ENCODE measurements at regions of chr11 and their contacts with region 1.

Region 1: GRCh38 chr11:76152086-76152681 is 54.1 kb downstream of the WNT11 start:
- DNase-seq: peak; percentile 68 to 81
- ATAC-seq: peak; percentile 91 to 95
- H3K4me3 ChIP-seq: peak overlapping the region; percentile 45 to 64 (median 52)
- H3K27ac ChIP-seq: no peak overlapping the region
- H3K4me1 ChIP-seq: peaks cover 3 to 10% of the 10 kb centered on the region in 2 donors
- H3K27me3 ChIP-seq: no peaks in the 10 kb centered on the region
- CTCF ChIP-seq: peak; percentile 91 to 97 (median 96)
- POLR2A ChIP-seq: no peak

Region 2: GRCh38 chr11:75786101-75786736 is 366.0 kb before region 1 on chr11:
- in situ Hi-C with region 1: loop called in 1 of 4 experiments (anchors 25 kb)
- intact Hi-C with region 1: no loop called
- DNase-seq: no peak
- ATAC-seq: no peak
- H3K4me3 ChIP-seq: no peak overlapping the region
- H3K27ac ChIP-seq: no peak overlapping the region
- H3K4me1 ChIP-seq: no peaks in the 10 kb centered on the region
- H3K27me3 ChIP-seq: no peaks in the 10 kb centered on the region
- CTCF ChIP-seq: no peak
- POLR2A ChIP-seq: no peak

Region 3: GRCh38 chr11:75802913-75803820 is 349.0 kb before region 1 on chr11:
- in situ Hi-C with region 1: loop called in 2 of 4 experiments (anchors 10 to 25 kb)
- intact Hi-C with region 1: loop called (anchors 1 kb)
- DNase-seq: peak; percentile 52 to 66
- ATAC-seq: peak; percentile 91 to 95
- H3K4me3 ChIP-seq: no peak overlapping the region
- H3K27ac ChIP-seq: no peak overlapping the region
- H3K4me1 ChIP-seq: no peaks in the 10 kb centered on the region
- H3K27me3 ChIP-seq: no peaks in the 10 kb centered on the region
- CTCF ChIP-seq: peak; percentile 76 to 93 (median 89)
- POLR2A ChIP-seq: no peak

Region 4: GRCh38 chr11:75896843-75897419 is 255.3 kb before region 1 on chr11:
- in situ Hi-C with region 1: loop called (anchors 5 kb)
- intact Hi-C with region 1: loop called (anchors 1 kb)
- DNase-seq: no peak
- ATAC-seq: peak in 1 of 2 donors; percentile 46
- H3K4me3 ChIP-seq: no peak overlapping the region
- H3K27ac ChIP-seq: no peak overlapping the region
- H3K4me1 ChIP-seq: peaks cover 13 to 21% of the 10 kb centered on the region in 2 donors
- H3K27me3 ChIP-seq: no peaks in the 10 kb centered on the region
- CTCF ChIP-seq: peak; percentile 61 to 74 (median 63)
- POLR2A ChIP-seq: no peak

Region 5: GRCh38 chr11:75907906-75908527 is 244.2 kb before region 1 on chr11:
- in situ Hi-C with region 1: loop called in 1 of 4 experiments (anchors 5 kb)
- intact Hi-C with region 1: no loop called
- DNase-seq: no peak
- ATAC-seq: no peak
- H3K4me3 ChIP-seq: no peak overlapping the region
- H3K27ac ChIP-seq: no peak overlapping the region
- H3K4me1 ChIP-seq: peaks cover 15 to 19% of the 10 kb centered on the region in 2 donors
- H3K27me3 ChIP-seq: no peaks in the 10 kb centered on the region
- CTCF ChIP-seq: no peak
- POLR2A ChIP-seq: no peak

Region 6: DNA sequence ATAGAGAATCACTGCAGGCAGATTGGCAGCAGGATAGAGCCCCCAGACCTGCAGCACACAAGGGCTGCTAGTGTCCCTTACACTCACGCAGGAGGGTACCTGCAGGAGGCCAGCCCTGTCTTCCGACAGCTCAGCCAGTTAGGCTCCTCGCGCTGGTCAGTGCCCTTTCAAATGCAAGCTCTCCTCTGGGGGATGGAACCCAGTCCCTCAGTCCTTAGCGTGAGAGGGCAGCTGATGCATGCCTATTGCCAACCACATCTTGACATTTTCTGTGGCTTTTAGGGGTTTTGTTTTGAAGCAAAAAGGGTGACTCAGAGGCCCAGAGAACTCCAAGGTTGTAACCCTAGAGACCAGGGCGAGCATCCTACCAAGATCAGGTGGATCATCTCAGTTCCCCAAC is 14.1 kb after region 1 on chr11:
- in situ Hi-C with region 1: no loop called
- intact Hi-C with region 1: no loop called
- DNase-seq: no peak
- ATAC-seq: no peak
- H3K4me3 ChIP-seq: no peak overlapping the region
- H3K27ac ChIP-seq: no peak overlapping the region
- H3K4me1 ChIP-seq: peaks cover 7 to 11% of the 10 kb centered on the region in 2 donors
- H3K27me3 ChIP-seq: no peaks in the 10 kb centered on the region
- CTCF ChIP-seq: no peak
- POLR2A ChIP-seq: no peak

Region 7: DNA sequence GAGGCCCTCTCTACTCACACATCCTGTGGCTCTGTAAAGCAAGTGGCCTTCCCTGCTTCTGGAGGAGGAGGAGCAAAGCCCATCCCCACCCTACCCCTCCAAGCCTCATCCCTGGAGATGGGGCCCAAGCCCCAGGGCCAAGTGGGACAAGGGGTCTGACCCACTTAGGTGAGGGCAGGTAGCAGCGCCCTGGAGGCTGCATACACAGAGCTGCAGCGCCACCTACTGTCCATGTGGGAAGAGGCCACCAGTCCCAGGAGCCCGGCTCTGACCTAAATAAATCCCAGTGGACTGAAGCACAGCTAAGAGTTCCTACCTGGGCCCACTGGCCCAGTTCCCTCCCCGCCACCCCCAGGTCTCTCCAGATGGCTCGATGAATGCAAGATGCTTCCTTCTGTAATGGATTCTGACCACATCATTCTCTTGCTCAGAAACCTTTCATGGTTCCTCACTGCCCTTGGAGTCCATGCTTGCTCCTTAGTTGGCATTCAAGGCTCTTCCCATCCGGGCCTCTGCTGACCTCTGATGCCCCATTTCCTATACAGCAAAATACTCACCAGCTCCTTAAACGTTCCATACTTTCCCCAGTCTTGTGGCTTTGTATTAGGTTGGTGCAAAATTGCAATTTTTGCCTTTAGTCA is 166.7 kb after region 1 on chr11:
- in situ Hi-C with region 1: no loop called
- intact Hi-C with region 1: loop called (anchors 1 kb)
- DNase-seq: peak; percentile 63 to 69
- ATAC-seq: peak; percentile 90 to 93
- H3K4me3 ChIP-seq: no peak overlapping the region
- H3K27ac ChIP-seq: no peak overlapping the region
- H3K4me1 ChIP-seq: no peaks in the 10 kb centered on the region
- H3K27me3 ChIP-seq: peaks cover 5 to 9% (median 8%) of the 10 kb centered on the region in 3 donors
- CTCF ChIP-seq: peak; percentile 89 to 95 (median 94)
- POLR2A ChIP-seq: no peak